ENCODE measurements at regions of chr2 and their contacts with region 1.

Region 1: DNA sequence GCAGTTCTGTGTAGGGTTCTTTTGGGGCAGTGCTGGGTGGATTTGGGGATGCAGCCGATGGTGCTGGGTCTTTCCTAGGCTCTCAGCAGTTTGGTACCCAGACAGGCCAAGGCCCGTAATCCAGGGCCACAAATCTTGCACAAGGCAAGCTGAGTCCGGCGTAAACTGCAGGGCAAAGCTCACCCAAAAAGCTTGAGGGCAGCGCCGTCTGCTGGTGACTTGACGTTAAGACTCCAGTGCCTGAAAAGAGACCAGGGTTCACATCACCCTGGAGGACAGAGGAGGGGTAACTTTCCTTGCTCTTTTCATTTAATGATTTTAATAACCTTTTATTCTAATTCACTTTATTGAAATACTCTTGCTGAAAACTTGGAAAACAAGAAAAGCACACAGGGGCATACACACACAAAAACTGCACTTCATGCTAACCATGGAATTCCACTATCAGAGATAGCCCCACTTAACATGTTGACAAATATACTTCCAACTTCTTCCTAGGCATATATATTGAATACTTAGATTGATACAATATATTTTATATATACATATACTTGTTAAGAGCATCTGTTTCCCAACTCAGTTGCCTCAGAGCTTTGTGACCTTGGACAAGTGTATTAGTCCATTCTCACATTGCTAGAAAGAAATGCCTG is 38.9 kb downstream of the CNGA3 start:
- DNase-seq: peak; percentile 84
- H3K4me3 Mint-ChIP-seq: no peak overlapping the region
- H3K27ac Mint-ChIP-seq: no peak overlapping the region
- H3K4me1 Mint-ChIP-seq: peaks cover 4% of the 10 kb centered on the region
- H3K27me3 Mint-ChIP-seq: peaks cover 40% of the 10 kb centered on the region
- CTCF ChIP-seq: peak; percentile 95

Region 2: DNA sequence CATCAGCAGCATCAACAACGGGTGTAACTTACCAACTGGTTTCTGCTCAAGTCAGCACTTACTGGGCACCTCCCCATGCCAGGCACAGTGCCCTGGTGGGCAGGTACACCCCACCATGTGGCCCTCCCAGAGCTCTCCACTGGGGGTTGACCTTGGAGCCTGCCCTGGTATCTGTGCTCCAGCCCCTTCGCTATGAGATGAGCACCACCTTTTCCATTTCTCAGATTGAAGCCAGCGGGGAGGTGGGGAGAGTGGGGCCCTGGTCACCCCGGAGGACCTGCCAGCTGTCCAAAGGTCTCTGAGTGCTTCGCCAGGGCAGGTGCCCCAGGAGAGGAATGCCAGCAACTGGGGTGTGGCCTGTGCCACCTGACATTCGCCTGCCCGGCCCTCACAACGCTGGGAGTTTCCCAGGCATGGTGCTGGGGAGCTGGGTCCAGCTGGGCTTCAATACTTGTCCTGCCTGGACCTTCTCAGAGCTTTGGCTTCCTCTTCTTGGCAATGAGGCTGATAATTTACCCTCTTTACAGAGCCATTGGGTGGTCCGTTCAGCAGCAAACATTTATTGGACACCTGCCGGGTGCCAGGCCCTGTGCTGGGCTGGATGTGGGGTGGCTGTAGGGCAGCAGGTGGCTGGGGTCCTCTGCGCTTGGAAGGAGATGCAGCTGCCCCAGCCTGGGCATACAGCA is 677.7 kb before region 1 on chr2:
- CTCF ChIA-PET with region 1: interaction called, 11 read pairs
- POLR2A ChIA-PET with region 1: no interaction called
- intact Hi-C with region 1: no loop called
- DNase-seq: no peak
- H3K4me3 Mint-ChIP-seq: no peak overlapping the region
- H3K27ac Mint-ChIP-seq: no peak overlapping the region
- H3K4me1 Mint-ChIP-seq: no peaks in the 10 kb centered on the region
- H3K27me3 Mint-ChIP-seq: no peaks in the 10 kb centered on the region
- CTCF ChIP-seq: no peak

Region 3: DNA sequence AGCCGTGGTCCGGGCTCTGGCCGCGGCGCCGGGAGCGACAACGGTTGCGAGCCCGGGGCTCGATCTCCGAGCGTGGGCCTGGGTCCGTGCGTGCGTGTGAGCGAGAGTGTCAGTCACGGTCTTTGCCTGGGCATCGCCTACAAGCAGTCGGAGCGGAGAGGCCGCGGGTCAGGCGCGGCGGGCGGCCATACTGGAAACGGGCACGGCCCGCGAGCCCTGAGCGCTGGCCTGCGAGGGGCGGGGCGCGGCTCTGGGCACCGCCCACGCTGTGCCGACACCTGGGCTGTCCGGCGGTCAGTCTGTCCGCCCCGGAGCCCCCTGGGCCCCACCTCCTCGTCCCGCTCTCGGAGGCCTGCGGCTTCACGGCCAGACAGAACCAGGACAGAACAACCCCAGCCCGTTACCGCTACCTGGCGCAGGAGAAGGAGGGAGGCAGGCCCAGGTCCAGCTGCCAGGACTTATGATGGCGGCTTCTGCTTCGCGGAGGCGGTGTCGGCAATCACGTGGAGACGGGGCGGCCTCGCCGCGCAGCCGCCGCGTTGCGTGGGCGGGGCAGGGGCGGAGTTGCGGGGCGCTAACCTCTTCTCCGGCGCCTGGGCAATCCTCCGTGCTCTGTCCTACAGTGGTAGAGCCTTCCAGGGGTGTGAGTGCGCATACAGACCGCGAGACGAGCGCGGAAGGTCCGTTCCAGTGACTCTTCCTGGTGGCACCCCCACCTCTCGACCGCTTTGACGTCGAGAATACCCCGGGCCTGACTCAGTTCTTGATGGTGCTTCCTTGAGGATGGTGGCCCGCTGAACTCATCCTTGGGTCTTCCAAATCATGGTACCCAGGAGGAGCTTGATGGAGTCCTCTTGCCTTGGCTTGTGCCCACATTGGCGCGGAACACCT is 389.2 kb before region 1 on chr2 and contains the start of gene TMEM131:
- CTCF ChIA-PET with region 1: interaction called, 3 read pairs
- POLR2A ChIA-PET with region 1: no interaction called
- intact Hi-C with region 1: loop called (anchors 10 kb)
- DNase-seq: peak; percentile 92
- H3K4me3 Mint-ChIP-seq: peak within 1 kb of the TSS; percentile 87
- H3K27ac Mint-ChIP-seq: peak within 1 kb of the TSS; percentile 75
- H3K4me1 Mint-ChIP-seq: peaks cover 22% of the 10 kb centered on the region
- H3K27me3 Mint-ChIP-seq: no peaks in the 10 kb centered on the region
- CTCF ChIP-seq: no peak
- total RNA-seq, gene TMEM131: 42.2 and 42.8 TPM in 2 replicates

Region 4: GRCh38 chr2:98188351-98189049 is 196.7 kb before region 1 on chr2:
- CTCF ChIA-PET with region 1: interaction called, 5 read pairs
- POLR2A ChIA-PET with region 1: interaction called, 3 read pairs
- intact Hi-C with region 1: loop called (anchors 2 kb)
- DNase-seq: peak; percentile 44
- H3K4me3 Mint-ChIP-seq: no peak overlapping the region
- H3K27ac Mint-ChIP-seq: no peak overlapping the region
- H3K4me1 Mint-ChIP-seq: no peaks in the 10 kb centered on the region
- H3K27me3 Mint-ChIP-seq: no peaks in the 10 kb centered on the region
- CTCF ChIP-seq: peak; percentile 32

Region 5: DNA sequence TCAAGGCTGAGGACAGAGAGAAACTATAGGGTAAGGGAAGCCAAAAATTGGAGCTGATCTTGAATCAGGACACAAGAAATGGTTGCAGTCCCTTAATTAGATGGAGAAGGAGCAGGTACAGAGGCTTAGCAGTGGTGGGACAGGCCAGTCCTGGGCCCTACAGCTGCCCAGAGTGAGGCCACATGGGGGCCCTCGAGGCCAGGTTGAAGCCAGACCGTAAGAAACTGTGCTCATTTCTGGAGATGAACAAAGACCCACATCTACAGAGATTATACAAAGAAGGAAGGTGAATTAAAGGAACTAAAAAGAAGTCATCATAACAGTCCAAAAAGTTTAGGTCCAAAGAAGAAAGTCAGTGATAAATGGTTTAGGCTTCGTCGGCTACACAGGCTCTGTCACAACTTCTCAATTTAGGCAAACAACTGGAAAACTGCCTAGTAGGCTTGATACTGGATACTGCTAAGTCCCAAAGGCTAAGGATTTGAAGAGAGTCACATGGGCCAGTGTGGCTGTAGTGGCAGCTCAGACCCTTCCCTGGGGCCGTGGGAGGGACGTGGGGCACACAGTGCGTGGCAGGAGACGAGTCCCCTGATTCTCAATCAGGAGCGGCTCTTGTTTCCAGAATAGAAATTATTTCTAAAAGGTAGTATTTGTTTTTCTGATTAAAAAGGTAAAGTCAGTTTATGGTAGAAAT is 89.3 kb before region 1 on chr2:
- CTCF ChIA-PET with region 1: no interaction called
- POLR2A ChIA-PET with region 1: no interaction called
- intact Hi-C with region 1: loop called (anchors 1 kb)
- DNase-seq: peak; percentile 6
- H3K4me3 Mint-ChIP-seq: no peak overlapping the region
- H3K27ac Mint-ChIP-seq: no peak overlapping the region
- H3K4me1 Mint-ChIP-seq: no peaks in the 10 kb centered on the region
- H3K27me3 Mint-ChIP-seq: peaks cover 41% of the 10 kb centered on the region
- CTCF ChIP-seq: no peak